Naive thymus-derived CD8-positive, alpha-beta T cell (primary cell): ENCODE measurements at regions of chr11 and their contacts with region 1.

Region 1: DNA sequence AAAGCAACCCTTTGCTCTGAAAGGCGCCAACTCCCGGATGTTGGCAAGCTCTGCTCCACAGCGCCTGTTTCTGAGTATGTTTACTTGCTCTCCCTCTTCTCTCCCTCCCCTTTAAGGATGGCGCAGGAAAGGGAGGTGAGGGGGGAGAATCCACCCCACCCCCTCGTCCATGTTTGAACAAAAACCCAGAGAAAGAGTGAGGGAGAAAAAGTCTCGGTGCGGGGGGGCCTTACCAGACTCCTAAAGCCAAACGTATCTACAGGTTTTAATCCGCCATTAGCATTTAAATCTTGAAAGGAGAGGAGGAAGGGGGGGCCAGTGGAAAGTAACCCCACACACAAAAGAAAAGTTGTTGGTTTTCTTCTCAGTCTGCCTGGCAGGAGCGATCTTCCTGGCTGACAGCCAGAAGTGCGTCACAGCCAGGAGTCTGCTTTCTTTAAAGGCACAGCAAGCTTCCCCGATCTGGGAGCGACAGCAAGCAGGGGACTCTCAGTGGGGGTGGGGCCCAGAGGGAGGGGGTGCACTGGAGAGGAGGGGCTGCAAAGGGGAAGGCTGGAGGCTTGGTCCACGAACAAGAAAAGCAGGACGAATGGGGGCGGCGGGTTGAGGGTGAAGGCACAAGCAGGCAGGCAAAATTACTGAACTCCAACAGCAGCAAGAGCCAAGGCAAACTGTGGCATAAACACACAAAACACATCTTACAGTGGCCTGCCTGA is 39.5 kb downstream of the NUMA1 start:
- DNase-seq: peak; percentile 72 to 91 (median 80)
- ATAC-seq: peak; percentile 68 to 78
- H3K4me3 Mint-ChIP-seq: no peak overlapping the region
- H3K27ac Mint-ChIP-seq: no peak overlapping the region
- H3K4me1 Mint-ChIP-seq: peaks cover 34 to 44% (median 43%) of the 10 kb centered on the region in 4 donors
- H3K27me3 Mint-ChIP-seq: no peaks in the 10 kb centered on the region

Region 2: GRCh38 chr11:71895961-71896360 is 144.9 kb before region 1 on chr11:
- POLR2A ChIA-PET with region 1: no interaction called
- DNase-seq: no peak
- ATAC-seq: no peak
- H3K4me3 Mint-ChIP-seq: no peak overlapping the region
- H3K27ac Mint-ChIP-seq: no peak overlapping the region
- H3K4me1 Mint-ChIP-seq: no peaks in the 10 kb centered on the region
- H3K27me3 Mint-ChIP-seq: no peaks in the 10 kb centered on the region

Region 3: DNA sequence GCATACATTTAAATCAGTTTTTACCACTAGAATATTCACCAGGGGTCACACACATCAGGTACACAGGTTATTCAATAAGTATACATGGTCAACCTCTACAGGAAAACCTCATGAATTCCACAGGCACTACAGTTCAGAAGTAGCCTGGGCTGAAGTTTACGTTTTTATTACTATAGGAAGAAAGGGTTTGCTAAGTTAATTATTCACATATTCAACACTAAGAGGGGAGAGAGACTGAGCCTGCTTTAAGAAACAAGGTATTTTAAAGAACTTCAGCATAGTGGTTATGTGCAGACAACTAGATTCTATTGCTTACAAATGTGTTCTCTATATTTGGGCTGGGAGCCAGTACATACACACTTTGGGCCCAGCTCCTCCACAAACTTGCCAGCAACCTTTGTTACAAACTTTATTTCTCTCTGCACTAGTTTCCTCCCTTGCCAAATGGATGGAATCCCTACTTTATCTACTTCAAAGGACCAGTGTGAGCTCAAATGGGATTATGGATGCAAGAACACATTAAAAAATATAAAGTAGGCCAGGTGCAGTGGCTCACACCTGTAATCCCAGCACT is 10.3 kb before region 1 on chr11:
- POLR2A ChIA-PET with region 1: interaction called, 85 read pairs
- DNase-seq: no peak
- ATAC-seq: no peak
- H3K4me3 Mint-ChIP-seq: peak overlapping the region in 8 of 10 donors; percentile 27 to 66 (median 39)
- H3K27ac Mint-ChIP-seq: peak overlapping the region; percentile 49 to 86 (median 78)
- H3K4me1 Mint-ChIP-seq: peaks cover 24 to 77% (median 62%) of the 10 kb centered on the region in 4 donors
- H3K27me3 Mint-ChIP-seq: no peaks in the 10 kb centered on the region

Region 4: DNA sequence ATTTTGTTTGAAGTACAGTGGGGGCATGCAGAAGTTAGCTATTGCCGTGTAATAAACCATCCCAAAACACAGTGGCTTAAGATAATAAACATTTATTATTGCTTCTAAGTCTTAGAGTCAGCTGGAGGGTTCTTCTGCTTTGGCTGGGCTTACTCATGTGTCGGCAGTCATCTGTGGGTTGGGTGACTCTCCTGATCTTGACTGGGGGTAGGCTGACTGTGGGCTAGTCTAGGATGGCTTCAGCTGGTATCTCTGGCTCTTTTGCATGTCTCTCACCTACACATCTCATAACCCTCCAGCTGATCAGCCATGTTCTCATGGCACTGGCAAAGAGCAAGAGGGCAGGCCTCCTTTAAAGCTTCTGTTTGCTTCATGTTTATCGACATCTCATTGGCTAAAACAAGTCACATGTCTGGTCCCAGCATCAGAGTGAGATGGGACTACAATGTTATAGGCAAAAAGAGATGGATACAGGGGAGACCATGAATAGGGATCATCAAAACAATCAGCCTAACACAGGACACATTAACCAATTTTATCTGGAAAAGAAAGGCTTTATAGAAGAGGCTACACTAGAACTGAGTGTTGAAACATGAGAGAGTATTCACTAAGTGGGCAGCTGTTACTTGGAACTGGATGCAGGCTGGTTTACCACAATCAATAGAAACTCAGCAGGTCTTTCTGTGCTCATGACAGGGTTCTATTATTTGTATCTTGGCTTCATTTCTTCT is 44.9 kb after region 1 on chr11:
- POLR2A ChIA-PET with region 1: interaction called, 56 read pairs
- DNase-seq: no peak
- ATAC-seq: no peak
- H3K4me3 Mint-ChIP-seq: no peak overlapping the region
- H3K27ac Mint-ChIP-seq: peak overlapping the region; percentile 4 to 93 (median 82)
- H3K4me1 Mint-ChIP-seq: peaks cover 18 to 25% (median 21%) of the 10 kb centered on the region in 4 donors
- H3K27me3 Mint-ChIP-seq: no peaks in the 10 kb centered on the region

Region 5: GRCh38 chr11:72102946-72103753 is 62.3 kb after region 1 on chr11 and contains the start of gene LAMTOR1:
- POLR2A ChIA-PET with region 1: interaction called, 79 read pairs
- DNase-seq: peak; percentile 90 to 99 (median 96)
- ATAC-seq: peak; percentile 94 to 97
- H3K4me3 Mint-ChIP-seq: peak within 1 kb of the TSS; percentile 66 to 96 (median 86)
- H3K27ac Mint-ChIP-seq: peak within 1 kb of the TSS; percentile 88 to 99 (median 94)
- H3K4me1 Mint-ChIP-seq: peaks cover 25 to 48% (median 47%) of the 10 kb centered on the region in 4 donors
- H3K27me3 Mint-ChIP-seq: no peaks in the 10 kb centered on the region
- polyA plus RNA-seq, gene LAMTOR1: 78.0 to 87.7 (median 78.6) TPM

Region 6: GRCh38 chr11:72222907-72223614 is 182.2 kb after region 1 on chr11:
- POLR2A ChIA-PET with region 1: interaction called, 22 read pairs
- DNase-seq: peak; percentile 87 to 95 (median 90)
- ATAC-seq: peak; percentile 70 to 75
- H3K4me3 Mint-ChIP-seq: peak overlapping the region; percentile 89 to 94 (median 92)
- H3K27ac Mint-ChIP-seq: peak overlapping the region; percentile 82 to 97 (median 94)
- H3K4me1 Mint-ChIP-seq: peaks cover 21 to 43% (median 33%) of the 10 kb centered on the region in 4 donors
- H3K27me3 Mint-ChIP-seq: peaks cover 0 to 6% (median 5%) of the 10 kb centered on the region in 5 donors

Region 7: DNA sequence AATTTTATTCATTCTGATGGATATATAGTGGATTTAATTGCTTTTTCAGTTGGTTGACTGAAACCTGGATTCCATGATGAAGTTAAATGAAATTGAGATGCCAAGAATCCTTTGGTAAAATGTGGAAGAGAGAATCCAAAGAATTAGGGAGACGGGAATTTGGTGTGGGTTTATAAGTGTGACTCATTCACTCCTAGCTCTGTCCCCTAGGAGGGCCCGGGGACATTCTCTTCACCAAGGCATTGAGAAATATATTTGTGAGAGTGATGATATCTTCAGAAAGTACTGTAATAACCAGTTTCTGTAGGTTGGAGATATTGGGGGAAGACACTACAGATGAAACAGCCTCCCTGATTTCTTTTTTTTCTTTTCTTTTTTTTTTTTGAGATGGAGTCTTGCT is 216.7 kb after region 1 on chr11:
- POLR2A ChIA-PET with region 1: no interaction called
- DNase-seq: no peak
- ATAC-seq: no peak
- H3K4me3 Mint-ChIP-seq: no peak overlapping the region
- H3K27ac Mint-ChIP-seq: no peak overlapping the region
- H3K4me1 Mint-ChIP-seq: peaks cover 0 to 2% (median 0%) of the 10 kb centered on the region in 4 donors
- H3K27me3 Mint-ChIP-seq: peaks cover 1 to 11% (median 6%) of the 10 kb centered on the region in 5 donors